Posterior cingulate gyrus (tissue), 11 donors: ENCODE measurements at regions of chr4 and their contacts with region 1.

Region 1: DNA sequence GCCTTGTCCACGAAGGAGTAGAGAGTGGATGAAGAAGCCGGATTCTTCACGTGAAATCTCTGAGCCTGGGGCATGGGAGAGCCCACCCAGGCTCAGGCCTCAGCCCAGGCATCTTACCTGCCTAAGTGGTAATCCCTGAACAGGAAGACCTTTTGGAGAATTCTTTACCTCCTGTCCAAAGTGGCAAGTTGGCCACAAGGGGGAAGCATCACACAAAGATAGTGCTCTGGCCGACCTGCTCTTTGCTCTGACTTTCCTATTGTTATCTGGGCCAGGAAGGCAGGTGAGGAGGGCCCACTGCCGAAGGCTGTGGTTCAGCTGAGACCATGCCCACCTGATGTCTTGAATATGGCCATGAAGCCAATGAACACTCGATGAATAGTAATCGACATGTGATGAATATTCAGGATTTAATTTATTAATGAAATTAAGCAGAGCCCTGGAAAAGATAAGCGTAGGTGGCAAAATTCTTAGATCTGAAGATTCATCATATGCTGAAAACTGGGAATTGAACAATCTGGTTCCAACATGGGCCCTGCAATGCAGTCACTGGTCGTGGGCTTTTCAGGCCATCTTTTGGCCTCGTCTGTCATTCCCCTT is 93.8 kb downstream of the PDGFRA start:
- DNase-seq: peak in 9 of 10 donors; percentile 31 to 93 (median 69)

Region 2: DNA sequence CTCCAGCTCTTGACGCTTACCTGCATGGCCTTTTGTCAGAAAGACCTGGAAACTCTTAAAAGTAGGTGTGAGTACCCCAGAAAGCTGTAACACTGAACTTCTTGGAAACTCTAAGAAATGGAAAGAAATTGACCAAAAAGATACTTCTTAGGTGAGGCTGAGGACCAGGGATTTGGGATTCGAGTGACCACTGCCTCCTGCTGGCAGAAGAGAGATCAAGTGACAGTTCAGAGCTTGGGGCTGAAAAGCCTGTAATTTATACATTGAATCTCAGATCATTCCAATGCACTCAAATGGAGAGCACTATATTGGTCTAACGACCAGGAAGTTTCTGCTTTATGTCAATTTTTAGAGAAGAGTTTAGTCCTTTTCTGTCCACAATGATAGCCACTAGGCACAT is 110.8 kb after region 1 on chr4:
- intact Hi-C with region 1: loop called (anchors 2 kb)
- DNase-seq: peak in 1 of 10 donors; percentile 13

Region 3: DNA sequence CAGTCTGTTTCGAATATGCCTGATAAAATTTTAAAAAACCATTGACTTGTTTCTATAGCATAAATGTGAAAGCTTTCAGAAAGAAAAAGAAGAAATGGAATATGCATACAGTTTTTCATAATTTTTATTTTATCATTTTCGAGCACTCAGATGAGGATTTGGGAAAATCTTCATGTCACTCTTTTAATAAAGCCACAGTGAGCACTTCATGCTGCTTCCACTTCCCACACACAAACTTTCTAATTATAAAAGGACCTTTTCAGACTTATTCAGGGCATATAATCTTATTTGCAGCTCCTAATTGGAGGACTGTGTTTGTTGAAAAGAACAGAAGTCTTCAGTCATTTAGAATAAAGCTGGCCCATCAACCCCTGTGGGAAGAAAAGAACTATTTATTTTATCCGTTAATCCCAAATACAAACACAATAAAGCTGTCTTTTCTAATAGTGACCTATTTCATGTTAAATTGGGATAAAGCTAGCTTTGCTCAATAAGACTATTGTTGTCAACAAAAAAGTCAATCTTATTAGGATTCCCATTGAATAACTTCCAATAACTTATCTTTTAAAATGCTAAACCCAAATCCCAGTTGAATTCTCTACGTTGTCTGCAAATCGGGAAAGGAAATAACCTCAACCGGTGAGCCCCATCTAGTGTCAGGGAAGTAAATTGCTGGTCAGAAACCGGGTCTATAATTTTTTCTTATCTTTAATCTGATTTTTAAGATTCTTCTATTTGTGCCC is 117.6 kb after region 1 on chr4:
- intact Hi-C with region 1: loop called (anchors 1 kb)
- DNase-seq: peak in 4 of 10 donors; percentile 8 to 39 (median 20)

Region 4: GRCh38 chr4:54961357-54961975 is 638.5 kb after region 1 on chr4:
- intact Hi-C with region 1: loop called (anchors 2 kb)
- DNase-seq: no peak